ENCODE measurements at regions of chr11 and their contacts with region 1.

Region 1: DNA sequence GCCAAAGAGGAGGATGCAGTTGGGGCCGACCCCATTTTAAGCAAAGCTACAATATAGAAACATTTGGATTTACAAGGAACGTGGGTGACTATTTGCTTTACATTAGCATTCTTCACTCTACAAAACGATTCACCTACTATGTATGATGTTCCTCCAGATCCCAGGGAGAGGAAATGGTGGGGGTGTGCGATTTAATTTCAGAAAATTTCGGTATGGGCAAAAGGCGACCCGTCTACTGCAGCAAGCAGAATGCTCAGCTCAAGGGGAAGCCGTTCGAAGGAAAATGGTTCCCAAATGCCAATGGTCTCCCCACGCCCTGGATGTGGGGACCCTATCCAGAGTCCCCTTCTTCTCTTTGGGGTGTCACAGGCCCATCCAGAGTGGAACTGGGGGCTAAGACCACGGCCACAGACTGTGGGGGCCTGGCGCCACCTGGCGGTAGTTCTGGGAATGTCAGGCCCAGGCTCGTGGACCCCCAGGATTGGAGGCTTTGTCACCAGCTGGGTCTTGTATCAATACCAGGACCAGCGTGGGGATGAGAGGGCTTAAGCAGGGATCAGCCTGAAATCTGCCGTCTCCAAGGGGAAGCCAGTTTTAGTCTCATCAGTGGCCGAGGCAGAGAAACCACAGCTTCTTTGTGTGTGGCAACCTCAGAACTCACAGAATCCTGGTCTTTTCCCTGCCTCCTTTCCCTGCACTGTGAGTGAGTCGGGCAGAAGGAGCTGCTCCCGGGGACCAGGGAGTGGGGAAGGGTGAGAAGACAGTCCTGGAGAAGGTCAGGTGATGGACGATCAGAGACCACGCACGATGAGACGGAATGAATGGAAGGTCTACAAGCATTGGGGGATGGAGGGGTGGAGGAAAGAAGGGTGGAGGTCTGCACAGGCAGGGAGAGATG is 8.4 kb downstream of the LRRC10B start:
- DNase-seq: no peak
- H3K4me3 ChIP-seq: no peak overlapping the region
- CTCF ChIP-seq: peak; percentile 94

Region 2: DNA sequence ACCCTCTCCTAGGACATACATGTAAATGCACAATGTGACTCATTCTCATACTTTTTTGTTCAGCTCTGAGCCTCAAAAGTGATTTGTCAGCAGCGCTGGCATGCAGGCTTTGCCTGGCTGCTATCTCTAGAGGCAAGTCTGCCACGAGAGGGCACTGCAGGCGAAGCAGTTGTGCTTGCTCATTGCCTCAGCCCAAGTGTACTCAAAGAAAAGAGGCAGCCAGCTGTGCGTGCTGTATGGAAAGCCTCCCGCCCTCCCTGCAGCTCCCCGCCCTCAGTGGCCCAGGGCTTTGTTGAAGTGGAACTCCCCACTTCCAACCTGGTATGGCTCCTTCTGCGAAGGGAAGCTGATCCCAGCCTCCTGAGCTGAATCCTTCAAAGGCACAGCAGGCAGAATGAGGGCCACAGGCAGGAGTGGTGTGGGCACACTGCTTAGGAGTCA is 70.7 kb before region 1 on chr11:
- CTCF ChIA-PET with region 1: interaction called, 215 read pairs
- POLR2A ChIA-PET with region 1: no interaction called
- DNase-seq: peak; percentile 83
- H3K4me3 ChIP-seq: no peak overlapping the region
- CTCF ChIP-seq: peak; percentile 95

Region 3: DNA sequence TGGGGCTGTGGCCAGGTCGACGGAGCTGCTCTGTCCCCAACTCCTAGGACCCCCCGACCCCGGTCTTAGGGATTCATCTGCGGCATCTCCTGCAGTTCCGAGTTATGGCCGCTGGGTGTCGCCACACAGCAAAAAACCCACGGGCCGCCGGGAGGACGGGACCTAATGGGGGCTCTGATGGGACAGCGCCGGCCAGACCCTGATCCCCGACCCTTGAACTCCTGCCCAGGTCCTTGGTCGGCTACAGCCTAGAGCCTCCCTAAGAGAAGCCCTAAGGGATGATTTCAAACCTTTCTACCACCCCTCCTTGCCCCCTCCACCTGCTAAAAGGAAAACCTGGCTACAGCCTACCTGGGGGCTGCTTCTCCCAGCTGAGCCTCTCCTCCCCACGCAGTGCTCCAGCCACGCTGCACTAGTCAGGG is 39.2 kb before region 1 on chr11:
- CTCF ChIA-PET with region 1: interaction called, 165 read pairs
- POLR2A ChIA-PET with region 1: no interaction called
- DNase-seq: no peak
- H3K4me3 ChIP-seq: no peak overlapping the region
- CTCF ChIP-seq: peak; percentile 89

Region 4: DNA sequence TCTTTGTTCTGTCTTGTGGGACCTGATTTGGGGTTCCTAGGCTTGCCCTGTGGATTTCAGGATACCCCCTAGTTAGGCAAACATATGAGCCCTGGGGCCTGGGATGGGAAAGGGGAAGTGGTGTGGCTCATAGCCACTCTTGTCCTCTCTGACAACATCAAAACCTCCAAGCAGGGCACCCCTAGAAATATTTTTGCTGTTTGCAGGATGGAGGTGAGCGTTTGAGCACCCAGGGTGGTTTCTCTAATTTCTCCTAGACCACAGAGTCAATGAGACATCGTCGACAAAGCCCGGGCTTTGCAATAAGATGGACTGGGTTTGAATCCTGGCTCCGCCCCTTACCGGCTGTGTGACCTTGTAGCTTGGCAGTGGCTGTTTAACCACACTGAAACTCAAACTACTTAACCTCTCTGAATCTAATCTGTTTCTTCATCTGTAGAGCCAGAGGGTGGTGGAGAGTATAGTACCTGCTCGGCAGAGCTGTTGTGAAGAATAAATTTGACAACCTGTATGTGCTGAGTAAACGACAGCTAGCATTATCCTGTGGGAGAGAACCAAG is 13.6 kb before region 1 on chr11:
- CTCF ChIA-PET with region 1: interaction called, 81 read pairs
- POLR2A ChIA-PET with region 1: interaction called, 3 read pairs
- DNase-seq: no peak
- H3K4me3 ChIP-seq: no peak overlapping the region
- CTCF ChIP-seq: no peak

Region 5: GRCh38 chr11:61549662-61550568 is 33.0 kb after region 1 on chr11:
- CTCF ChIA-PET with region 1: interaction called, 57 read pairs
- POLR2A ChIA-PET with region 1: no interaction called
- DNase-seq: no peak
- H3K4me3 ChIP-seq: no peak overlapping the region
- CTCF ChIP-seq: no peak

Region 6: DNA sequence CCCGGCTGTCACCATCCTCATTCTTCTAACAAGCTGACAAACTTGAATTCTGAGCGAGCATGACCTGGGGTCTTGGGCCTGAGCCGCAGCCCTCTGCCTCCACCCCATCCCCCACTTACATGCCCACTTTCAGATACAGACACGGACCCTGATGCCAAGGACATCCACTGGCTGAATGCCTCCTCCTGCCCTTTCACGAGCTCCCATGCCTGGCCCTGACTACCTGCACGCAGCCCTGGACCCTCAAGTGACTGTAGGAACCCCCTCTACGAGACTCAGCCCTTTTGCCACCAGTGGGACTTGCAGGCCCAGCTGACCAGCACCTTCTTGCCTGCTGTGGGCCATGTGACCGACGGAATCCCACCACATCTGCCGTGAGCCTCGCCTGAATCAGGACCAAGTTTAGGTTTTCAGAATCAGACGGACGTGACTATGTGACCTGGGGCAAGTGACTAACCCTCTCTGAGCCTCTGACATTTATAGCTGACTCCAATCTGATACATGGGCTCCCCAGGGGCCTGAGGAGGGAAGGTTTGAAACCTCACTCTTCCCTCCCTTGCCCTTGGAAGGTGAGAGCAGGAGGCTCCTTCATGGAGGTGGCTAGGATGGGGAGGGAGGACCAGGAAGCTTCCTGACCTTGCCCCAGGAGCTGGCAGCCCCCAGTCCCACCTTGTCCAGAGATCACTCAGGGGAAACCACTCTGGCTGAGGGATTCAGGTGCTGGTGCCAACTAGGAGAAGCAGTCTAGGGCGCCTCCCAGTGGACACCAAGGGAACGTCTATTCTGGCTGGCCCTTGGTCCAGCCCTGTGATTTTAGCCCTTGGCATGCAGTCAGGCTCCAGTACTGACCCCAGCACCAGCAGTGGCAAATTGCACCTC is 110.9 kb after region 1 on chr11:
- CTCF ChIA-PET with region 1: interaction called, 35 read pairs
- POLR2A ChIA-PET with region 1: no interaction called
- DNase-seq: no peak
- H3K4me3 ChIP-seq: no peak overlapping the region
- CTCF ChIP-seq: peak; percentile 84

Region 7: GRCh38 chr11:61695917-61696316 is 179.0 kb after region 1 on chr11:
- CTCF ChIA-PET with region 1: no interaction called
- POLR2A ChIA-PET with region 1: no interaction called
- DNase-seq: peak; percentile 28
- H3K4me3 ChIP-seq: peak overlapping the region; percentile 18; the same call in 1 of the 2 replicates
- CTCF ChIP-seq: peak; percentile 17

Measured in AG04449 (cell line).